ENCODE measurements at regions of chr1 and their contacts with region 1.

Region 1: DNA sequence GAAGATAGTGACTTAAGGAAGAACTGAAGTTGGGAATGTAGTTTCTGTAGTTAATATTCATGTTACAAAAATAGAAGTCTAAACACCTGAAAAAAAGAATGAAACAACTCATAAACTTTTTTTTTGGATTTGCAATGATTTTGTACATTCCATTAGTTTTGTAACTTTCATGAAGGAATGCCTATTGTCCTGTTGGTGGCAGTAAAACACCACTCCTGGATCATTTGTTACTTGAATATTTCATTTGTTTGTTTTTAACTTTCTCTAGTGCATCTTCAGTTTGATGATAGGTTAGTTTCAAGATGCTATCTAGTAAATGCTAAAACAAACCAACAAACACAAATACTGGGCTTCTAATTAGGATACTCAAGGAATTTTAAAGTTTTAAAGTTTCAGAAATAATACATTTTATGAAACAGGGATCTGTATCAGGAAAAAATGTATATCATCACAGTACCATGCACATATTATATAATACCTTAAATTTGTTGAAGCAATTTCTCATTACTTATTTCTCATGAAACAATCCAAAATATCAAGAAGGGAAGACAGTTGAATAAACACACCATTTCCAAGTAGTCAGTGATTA is 229.7 kb upstream of the CACYBP start:
- DNase-seq: peak in 1 of 2 experiments; percentile 19
- H3K4me3 ChIP-seq: no peak overlapping the region
- H3K4me3 Mint-ChIP-seq: no peak overlapping the region
- H3K27ac Mint-ChIP-seq: no peak overlapping the region
- H3K4me1 ChIP-seq: peaks cover 23% of the 10 kb centered on the region
- H3K4me1 Mint-ChIP-seq: peaks cover 34% of the 10 kb centered on the region
- H3K27me3 ChIP-seq: no peaks in the 10 kb centered on the region
- H3K27me3 Mint-ChIP-seq: no peaks in the 10 kb centered on the region
- CTCF ChIP-seq: peak; percentile 49 to 67

Region 2: DNA sequence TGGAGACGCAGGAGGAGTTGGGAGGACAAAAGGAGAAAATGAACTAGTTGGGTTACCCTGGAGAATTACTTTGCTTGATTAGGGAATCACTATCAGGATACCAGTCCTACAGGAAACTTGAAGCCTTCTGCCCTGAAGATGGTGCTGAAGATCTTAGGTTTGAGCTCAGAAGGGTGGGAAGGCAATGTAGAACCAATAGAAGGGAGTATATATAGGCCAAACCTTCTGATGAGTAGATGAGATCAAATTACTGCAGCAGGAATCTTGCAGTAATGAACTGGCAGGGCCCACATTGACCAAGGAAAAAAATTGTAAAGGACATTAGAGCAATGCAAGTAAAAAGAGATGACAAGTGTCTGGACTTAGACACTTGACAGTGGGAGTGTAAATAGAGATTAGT is 113.4 kb after region 1 on chr1:
- CTCF ChIA-PET with region 1: no interaction called
- POLR2A ChIA-PET with region 1: no interaction called
- intact Hi-C with region 1: loop called (anchors 10 kb)
- DNase-seq: peak in 1 of 2 experiments; percentile 35
- H3K4me3 ChIP-seq: no peak overlapping the region
- H3K4me3 Mint-ChIP-seq: no peak overlapping the region
- H3K27ac Mint-ChIP-seq: no peak overlapping the region
- H3K4me1 ChIP-seq: no peaks in the 10 kb centered on the region
- H3K4me1 Mint-ChIP-seq: no peaks in the 10 kb centered on the region
- H3K27me3 ChIP-seq: no peaks in the 10 kb centered on the region
- H3K27me3 Mint-ChIP-seq: no peaks in the 10 kb centered on the region
- CTCF ChIP-seq: no peak

Region 3: DNA sequence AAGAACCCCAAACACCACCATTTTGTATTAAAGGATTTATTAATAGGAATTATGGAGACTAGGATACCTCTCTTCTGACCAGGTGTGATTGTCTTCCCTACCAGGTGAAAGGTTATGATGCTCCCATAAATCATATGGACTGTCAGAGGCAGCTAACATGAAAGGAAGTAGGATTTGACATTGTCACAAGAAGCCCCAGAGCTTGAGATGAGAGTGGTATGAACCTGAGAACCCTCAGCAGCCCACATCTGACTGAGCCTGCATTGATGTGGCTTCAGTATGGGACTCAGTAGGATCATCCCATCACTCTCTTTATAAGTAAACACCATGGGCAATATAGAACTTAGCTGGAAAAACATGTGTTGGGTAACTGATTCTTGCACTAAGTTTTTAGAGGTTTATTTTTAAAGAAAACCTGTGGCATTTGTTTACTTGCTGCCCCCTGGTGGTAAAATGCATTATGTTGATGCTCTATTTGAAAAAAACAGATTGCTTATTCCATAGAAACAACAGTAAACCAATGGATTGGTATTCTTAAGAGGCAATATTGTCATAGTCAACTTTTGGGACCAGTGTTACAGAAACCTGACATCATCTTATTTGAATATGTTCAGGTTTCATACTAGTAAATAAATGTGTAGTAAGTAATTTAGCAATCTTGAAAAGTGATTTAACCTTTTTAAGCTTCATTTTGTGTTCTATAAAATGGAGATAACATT is 213.1 kb after region 1 on chr1:
- CTCF ChIA-PET with region 1: no interaction called
- POLR2A ChIA-PET with region 1: no interaction called
- intact Hi-C with region 1: loop called (anchors 1 kb)
- DNase-seq: peak in 1 of 2 experiments; percentile 39
- H3K4me3 ChIP-seq: no peak overlapping the region
- H3K4me3 Mint-ChIP-seq: no peak overlapping the region
- H3K27ac Mint-ChIP-seq: no peak overlapping the region
- H3K4me1 ChIP-seq: no peaks in the 10 kb centered on the region
- H3K4me1 Mint-ChIP-seq: peaks cover 6% of the 10 kb centered on the region
- H3K27me3 ChIP-seq: no peaks in the 10 kb centered on the region
- H3K27me3 Mint-ChIP-seq: no peaks in the 10 kb centered on the region
- CTCF ChIP-seq: peak; percentile 39 to 47

Region 4: DNA sequence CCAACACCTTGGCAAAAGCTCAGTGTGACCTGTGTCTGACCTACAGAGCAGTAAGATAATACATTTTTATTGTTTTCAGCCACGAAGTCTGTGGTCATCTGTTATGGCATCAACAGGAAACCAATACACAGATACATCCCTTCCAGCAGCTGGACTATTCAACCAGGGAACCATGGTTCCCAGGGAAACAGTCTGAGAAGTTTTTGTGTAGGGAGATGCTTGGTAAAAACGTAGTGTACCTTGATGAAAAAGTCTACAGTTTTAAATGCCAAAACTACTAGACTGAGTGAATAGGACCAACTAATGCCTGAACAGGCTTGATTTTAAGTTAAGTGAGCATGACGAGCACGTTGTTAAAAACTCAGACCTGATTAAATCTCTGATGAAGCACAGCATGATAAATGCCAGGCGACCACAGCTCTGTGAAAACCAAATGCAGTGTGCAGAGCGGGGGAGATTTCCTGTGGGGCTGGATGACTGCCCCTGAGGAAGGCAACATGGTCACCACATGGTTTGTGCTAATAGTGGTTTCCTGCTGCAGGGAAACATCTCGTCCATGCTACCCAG is 744.4 kb after region 1 on chr1:
- CTCF ChIA-PET with region 1: no interaction called
- POLR2A ChIA-PET with region 1: no interaction called
- intact Hi-C with region 1: no loop called
- DNase-seq: no peak
- H3K4me3 ChIP-seq: no peak overlapping the region
- H3K4me3 Mint-ChIP-seq: no peak overlapping the region
- H3K27ac Mint-ChIP-seq: no peak overlapping the region
- H3K4me1 ChIP-seq: no peaks in the 10 kb centered on the region
- H3K4me1 Mint-ChIP-seq: no peaks in the 10 kb centered on the region
- H3K27me3 ChIP-seq: 0 out of 2 replicates have a peak, but pooled peaks cover 1% of the 10 kb centered on the region
- H3K27me3 Mint-ChIP-seq: peaks cover 18% of the 10 kb centered on the region
- CTCF ChIP-seq: no peak